ENCODE measurements at regions of chr10 and their contacts with region 1.

Region 1: GRCh38 chr10:73810735-73811465 is 498 bp downstream of the NDST2 start:
- DNase-seq: peak in 4 of 5 donors; percentile 43 to 79 (median 48)
- ATAC-seq: peak in 2 of 4 donors; percentile 39 to 46
- H3K4me3 ChIP-seq: peak overlapping the region; percentile 61 to 99 (median 94)
- H3K27ac ChIP-seq: peak overlapping the region; percentile 79 to 97 (median 93)
- H3K4me1 ChIP-seq: peaks cover 0 to 62% (median 16%) of the 10 kb centered on the region in 12 donors
- H3K27me3 ChIP-seq: no peaks in the 10 kb centered on the region
- CTCF ChIP-seq: no peak
- POLR2A ChIP-seq: no peak

Region 2: DNA sequence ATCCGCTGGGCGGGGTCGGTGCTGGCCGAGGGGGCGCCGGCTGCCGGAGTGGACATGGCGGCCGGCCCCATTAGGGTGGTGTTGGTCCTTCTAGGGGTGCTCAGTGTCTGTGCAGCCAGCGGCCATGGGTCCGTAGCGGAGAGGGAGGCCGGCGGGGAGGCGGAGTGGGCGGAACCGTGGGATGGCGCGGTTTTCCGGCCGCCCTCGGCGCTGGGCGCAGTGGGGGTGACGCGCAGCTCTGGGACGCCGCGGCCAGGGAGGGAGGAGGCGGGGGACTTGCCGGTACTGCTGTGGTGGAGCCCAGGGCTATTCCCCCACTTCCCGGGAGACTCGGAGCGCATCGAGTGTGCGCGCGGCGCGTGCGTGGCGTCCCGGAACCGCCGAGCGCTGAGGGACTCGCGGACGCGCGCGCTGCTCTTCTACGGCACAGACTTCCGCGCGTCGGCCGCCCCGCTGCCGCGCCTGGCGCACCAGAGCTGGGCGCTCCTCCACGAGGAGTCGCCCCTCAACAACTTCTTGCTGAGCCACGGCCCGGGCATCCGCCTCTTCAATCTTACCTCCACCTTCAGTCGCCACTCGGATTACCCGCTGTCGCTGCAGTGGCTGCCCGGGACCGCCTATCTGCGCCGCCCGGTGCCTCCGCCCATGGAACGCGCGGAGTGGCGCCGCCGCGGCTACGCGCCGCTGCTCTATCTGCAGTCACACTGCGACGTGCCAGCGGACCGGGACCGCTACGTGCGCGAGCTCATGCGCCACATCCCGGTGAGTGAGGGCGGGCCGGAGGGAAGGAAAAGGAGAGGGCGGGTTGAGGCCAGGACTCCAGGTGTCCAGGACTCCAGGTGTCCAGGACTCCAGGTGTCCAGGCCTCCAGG is 38.4 kb before region 1 on chr10:
- intact Hi-C with region 1: loop called in 1 of 10 experiments (anchors 1 kb)
- DNase-seq: peak; percentile 82 to 90 (median 87)
- ATAC-seq: peak; percentile 61 to 87 (median 85)
- H3K4me3 ChIP-seq: peak overlapping the region; percentile 46 to 95 (median 83)
- H3K27ac ChIP-seq: peak overlapping the region; percentile 93 to 100 (median 98)
- H3K4me1 ChIP-seq: peaks cover 7 to 52% (median 31%) of the 10 kb centered on the region in 12 donors
- H3K27me3 ChIP-seq: no peaks in the 10 kb centered on the region
- CTCF ChIP-seq: peak in 5 of 12 donors; percentile 16 to 43 (median 31)
- POLR2A ChIP-seq: peak; percentile 51 to 93

Region 3: GRCh38 chr10:73997787-73998622 is 187.1 kb after region 1 on chr10 and contains the start of gene VCL:
- intact Hi-C with region 1: no loop called
- DNase-seq: peak; percentile 98 to 99 (median 98)
- ATAC-seq: peak; percentile 96 to 97 (median 97)
- H3K4me3 ChIP-seq: peak within 1 kb of the TSS; percentile 77 to 98 (median 94)
- H3K27ac ChIP-seq: peak within 1 kb of the TSS; percentile 78 to 99 (median 93)
- H3K4me1 ChIP-seq: peaks cover 0 to 42% (median 26%) of the 10 kb centered on the region in 12 donors
- H3K27me3 ChIP-seq: no peaks in the 10 kb centered on the region
- CTCF ChIP-seq: no peak
- POLR2A ChIP-seq: peak; percentile 84 to 99
- total RNA-seq, gene VCL: 215 to 543 (median 273) TPM